ENCODE measurements at regions of chr20 and their contacts with region 1.

Region 1: DNA sequence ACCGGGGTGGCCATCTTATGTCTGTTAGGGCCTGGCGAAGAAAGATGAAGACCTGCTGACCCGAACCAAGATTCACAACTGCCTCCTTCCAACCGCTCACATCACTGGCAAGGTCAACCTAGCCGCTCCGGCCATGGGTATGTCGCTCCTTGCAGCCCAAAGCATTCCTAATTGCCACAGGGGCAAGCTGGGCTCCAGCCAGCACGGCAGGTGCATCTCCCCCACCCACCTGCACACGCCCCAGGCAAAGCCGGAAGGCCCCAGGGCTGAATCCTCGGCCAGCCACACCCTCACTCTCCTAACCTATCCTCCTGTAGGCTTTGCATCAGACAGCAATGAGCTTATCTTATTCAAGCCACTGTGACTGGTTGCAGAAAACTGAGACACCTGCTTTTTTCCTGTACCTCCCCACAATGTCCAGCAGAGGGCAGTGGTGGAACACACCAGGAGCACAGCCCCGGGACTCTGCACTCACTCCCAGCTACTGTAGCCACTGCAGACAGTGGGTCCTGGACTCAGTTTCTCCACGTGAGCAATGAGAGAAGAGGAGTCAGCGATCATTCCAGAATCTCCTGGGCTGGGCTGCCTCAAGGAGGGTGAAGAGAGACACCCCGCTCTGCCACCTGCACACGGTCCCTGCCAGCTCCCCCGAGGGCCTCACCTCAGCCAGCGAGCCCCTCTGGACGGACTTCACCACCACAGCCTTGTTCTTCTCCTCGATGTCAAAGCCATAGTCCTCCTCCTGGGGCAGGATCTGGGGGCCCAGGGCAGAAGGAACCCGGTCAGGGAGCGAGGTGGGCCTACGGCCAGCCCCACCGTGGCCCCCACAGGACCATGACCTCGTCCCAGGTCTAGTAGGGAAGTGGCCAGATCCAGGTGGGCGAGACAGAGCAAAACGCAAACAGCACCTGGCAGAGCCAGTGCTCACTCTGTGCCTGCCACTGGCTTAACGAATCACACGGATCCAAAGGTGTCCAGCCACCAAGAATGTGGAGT is 170.0 kb downstream of the PREX1 start:
- DNase-seq: peak; percentile 26 to 83 (median 68)
- ATAC-seq: peak; percentile 93
- H3K4me3 ChIP-seq: no peak overlapping the region
- H3K4me3 Mint-ChIP-seq: no peak overlapping the region
- H3K27ac ChIP-seq: no peak overlapping the region
- H3K27ac Mint-ChIP-seq: peak overlapping the region; percentile 74
- H3K4me1 ChIP-seq: no peaks in the 10 kb centered on the region
- H3K4me1 Mint-ChIP-seq: peaks cover 23% of the 10 kb centered on the region
- H3K27me3 ChIP-seq: no peaks in the 10 kb centered on the region
- H3K27me3 Mint-ChIP-seq: no peaks in the 10 kb centered on the region
- CTCF ChIP-seq: peak; percentile 96

Region 2: GRCh38 chr20:48489656-48490055 is 168.1 kb before region 1 on chr20:
- CTCF ChIA-PET with region 1: no interaction called
- POLR2A ChIA-PET with region 1: no interaction called
- intact Hi-C with region 1: no loop called
- DNase-seq: no peak
- ATAC-seq: no peak
- H3K4me3 ChIP-seq: no peak overlapping the region
- H3K4me3 Mint-ChIP-seq: no peak overlapping the region
- H3K27ac ChIP-seq: no peak overlapping the region
- H3K27ac Mint-ChIP-seq: no peak overlapping the region
- H3K4me1 ChIP-seq: no peaks in the 10 kb centered on the region
- H3K4me1 Mint-ChIP-seq: no peaks in the 10 kb centered on the region
- H3K27me3 ChIP-seq: no peaks in the 10 kb centered on the region
- H3K27me3 Mint-ChIP-seq: peaks cover 32% of the 10 kb centered on the region
- CTCF ChIP-seq: no peak

Region 3: DNA sequence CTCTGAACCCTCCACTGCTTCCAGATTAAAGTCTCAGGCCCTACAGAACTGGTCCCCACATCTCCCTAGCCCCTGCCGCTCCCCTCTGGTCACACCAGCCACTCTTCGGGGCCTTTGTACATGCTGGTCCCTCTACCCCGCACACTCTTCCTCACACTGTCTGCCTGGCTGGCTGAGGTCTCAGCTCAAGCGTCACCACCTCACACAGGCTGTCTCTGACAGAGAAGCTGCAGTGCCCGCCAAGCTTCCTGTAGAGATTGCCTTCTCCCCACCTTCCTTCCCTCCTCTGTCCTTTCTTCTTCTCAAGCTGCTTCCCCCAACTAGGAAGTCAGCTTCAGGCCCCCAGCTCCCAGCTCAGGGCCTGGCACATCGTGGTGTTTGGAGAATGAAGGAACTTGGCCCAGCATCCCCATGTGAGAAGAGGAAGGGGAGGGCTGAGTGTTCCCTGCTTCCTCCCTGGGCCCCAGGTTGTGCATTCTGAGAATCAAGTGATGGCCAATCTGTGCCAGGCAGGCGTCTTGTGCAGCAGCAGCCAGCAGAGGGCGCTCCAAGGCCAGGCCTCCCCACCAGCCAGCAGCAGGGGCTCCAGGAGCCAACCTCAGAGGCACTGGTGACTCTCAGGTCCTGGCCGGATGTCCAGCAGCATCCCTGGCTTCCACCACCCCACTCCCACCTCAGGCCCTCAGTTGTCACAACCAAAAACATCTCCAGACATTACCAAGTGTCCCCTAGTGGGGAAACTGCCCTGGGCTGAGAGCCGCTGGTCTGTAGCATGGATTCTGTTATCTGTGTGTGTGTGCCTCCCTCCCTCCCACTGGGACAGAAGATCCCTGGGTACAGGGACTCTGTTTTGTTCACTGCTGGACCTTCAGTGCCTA is 22.1 kb before region 1 on chr20:
- CTCF ChIA-PET with region 1: interaction called, 10 read pairs
- POLR2A ChIA-PET with region 1: no interaction called
- intact Hi-C with region 1: no loop called
- DNase-seq: peak in 8 of 9 experiments; percentile 52 to 74 (median 64)
- ATAC-seq: peak; percentile 34
- H3K4me3 ChIP-seq: no peak overlapping the region
- H3K4me3 Mint-ChIP-seq: no peak overlapping the region
- H3K27ac ChIP-seq: no peak overlapping the region
- H3K27ac Mint-ChIP-seq: no peak overlapping the region
- H3K4me1 ChIP-seq: no peaks in the 10 kb centered on the region
- H3K4me1 Mint-ChIP-seq: peaks cover 2% of the 10 kb centered on the region
- H3K27me3 ChIP-seq: no peaks in the 10 kb centered on the region
- H3K27me3 Mint-ChIP-seq: no peaks in the 10 kb centered on the region
- CTCF ChIP-seq: peak; percentile 13

Region 4: GRCh38 chr20:48718857-48719578 is 61.2 kb after region 1 on chr20:
- CTCF ChIA-PET with region 1: interaction called, 10 read pairs
- POLR2A ChIA-PET with region 1: no interaction called
- intact Hi-C with region 1: no loop called
- DNase-seq: peak in 8 of 9 experiments; percentile 31 to 77 (median 60)
- ATAC-seq: peak; percentile 46
- H3K4me3 ChIP-seq: no peak overlapping the region
- H3K4me3 Mint-ChIP-seq: peak overlapping the region; percentile 66
- H3K27ac ChIP-seq: peak overlapping the region in 1 of 2 experiments; percentile 60
- H3K27ac Mint-ChIP-seq: peak overlapping the region; percentile 92
- H3K4me1 ChIP-seq: peaks cover 98% of the 10 kb centered on the region
- H3K4me1 Mint-ChIP-seq: peaks cover 95% of the 10 kb centered on the region
- H3K27me3 ChIP-seq: no peaks in the 10 kb centered on the region
- H3K27me3 Mint-ChIP-seq: no peaks in the 10 kb centered on the region
- CTCF ChIP-seq: no peak

Region 5: DNA sequence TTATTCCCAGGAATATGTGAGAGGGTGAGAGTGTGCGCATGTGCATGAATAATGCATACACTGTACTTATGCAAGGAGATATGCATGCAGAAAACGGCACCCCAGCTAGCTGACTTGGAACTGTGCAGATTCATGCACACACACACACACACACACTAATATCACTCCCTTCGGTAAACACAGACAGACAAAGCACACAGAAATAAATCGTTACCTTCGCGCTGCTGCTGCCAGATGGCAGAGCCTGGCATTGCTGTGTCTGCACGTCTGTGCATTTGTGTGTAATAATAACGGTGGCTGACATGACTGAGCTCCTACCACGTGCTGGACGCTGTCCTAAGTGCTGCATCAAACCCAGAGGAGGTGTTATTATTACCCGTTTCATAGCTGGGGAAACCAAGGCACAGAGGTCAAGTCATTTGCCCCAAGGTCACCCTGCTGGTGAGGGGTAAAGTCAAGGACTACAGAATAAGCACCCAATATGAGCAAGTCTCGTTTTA is 133.3 kb after region 1 on chr20:
- CTCF ChIA-PET with region 1: interaction called, 6 read pairs
- POLR2A ChIA-PET with region 1: no interaction called
- intact Hi-C with region 1: loop called (anchors 1 to 2 kb)
- DNase-seq: peak in 4 of 9 experiments; percentile 23 to 50 (median 40)
- ATAC-seq: peak; percentile 66
- H3K4me3 ChIP-seq: no peak overlapping the region
- H3K4me3 Mint-ChIP-seq: peak overlapping the region; percentile 26
- H3K27ac ChIP-seq: no peak overlapping the region
- H3K27ac Mint-ChIP-seq: peak overlapping the region; percentile 19
- H3K4me1 ChIP-seq: peaks cover 65% of the 10 kb centered on the region
- H3K4me1 Mint-ChIP-seq: peaks cover 87% of the 10 kb centered on the region
- H3K27me3 ChIP-seq: no peaks in the 10 kb centered on the region
- H3K27me3 Mint-ChIP-seq: no peaks in the 10 kb centered on the region
- CTCF ChIP-seq: peak; percentile 43

Region 6: DNA sequence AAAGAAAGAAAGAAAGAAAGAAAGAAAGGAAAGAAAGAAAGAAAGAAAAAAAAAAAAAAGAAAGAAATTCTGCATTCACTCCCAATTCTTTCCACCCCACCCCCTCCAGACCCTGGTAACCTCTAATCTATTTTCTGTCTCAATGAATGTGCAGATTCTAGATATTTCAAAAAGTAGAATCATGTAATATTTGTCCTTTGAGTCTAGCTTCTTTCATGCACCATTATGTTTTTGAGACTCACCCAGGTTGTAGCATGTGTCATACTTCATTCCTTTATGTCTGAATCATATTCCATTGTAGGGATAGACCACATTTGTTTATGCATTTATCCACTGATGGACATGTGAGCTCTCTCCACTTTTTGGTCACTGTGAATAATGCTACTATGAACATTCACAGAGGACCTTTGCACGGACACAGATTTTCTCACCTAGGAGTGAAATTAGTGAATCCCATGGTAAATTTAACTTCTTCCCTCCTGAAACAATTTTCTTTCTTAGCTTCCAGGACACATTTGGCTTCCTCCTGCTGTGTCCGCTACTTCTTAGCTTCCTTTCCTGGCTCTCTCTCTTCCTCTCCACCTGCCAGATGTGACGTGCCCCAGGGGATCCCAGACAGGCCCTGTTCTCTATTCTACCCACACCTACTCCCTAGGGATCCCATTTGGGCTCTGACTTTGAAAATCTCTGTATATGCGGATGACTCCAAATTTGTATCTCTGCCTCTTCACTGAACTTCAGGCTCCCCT is 239.6 kb after region 1 on chr20:
- CTCF ChIA-PET with region 1: interaction called, 30 read pairs
- POLR2A ChIA-PET with region 1: no interaction called
- intact Hi-C with region 1: no loop called
- DNase-seq: no peak
- ATAC-seq: no peak
- H3K4me3 ChIP-seq: no peak overlapping the region
- H3K4me3 Mint-ChIP-seq: no peak overlapping the region
- H3K27ac ChIP-seq: no peak overlapping the region
- H3K27ac Mint-ChIP-seq: no peak overlapping the region
- H3K4me1 ChIP-seq: no peaks in the 10 kb centered on the region
- H3K4me1 Mint-ChIP-seq: no peaks in the 10 kb centered on the region
- H3K27me3 ChIP-seq: no peaks in the 10 kb centered on the region
- H3K27me3 Mint-ChIP-seq: no peaks in the 10 kb centered on the region
- CTCF ChIP-seq: no peak

Region 7: GRCh38 chr20:48912065-48912762 is 254.4 kb after region 1 on chr20:
- CTCF ChIA-PET with region 1: interaction called, 204 read pairs
- POLR2A ChIA-PET with region 1: no interaction called
- intact Hi-C with region 1: no loop called
- DNase-seq: peak in 1 of 9 experiments; percentile 20
- ATAC-seq: no peak
- H3K4me3 ChIP-seq: no peak overlapping the region
- H3K4me3 Mint-ChIP-seq: no peak overlapping the region
- H3K27ac ChIP-seq: no peak overlapping the region
- H3K27ac Mint-ChIP-seq: no peak overlapping the region
- H3K4me1 ChIP-seq: no peaks in the 10 kb centered on the region
- H3K4me1 Mint-ChIP-seq: peaks cover 6% of the 10 kb centered on the region
- H3K27me3 ChIP-seq: no peaks in the 10 kb centered on the region
- H3K27me3 Mint-ChIP-seq: no peaks in the 10 kb centered on the region
- CTCF ChIP-seq: no peak

Region 8: GRCh38 chr20:48999890-49000870 is 342.4 kb after region 1 on chr20:
- CTCF ChIA-PET with region 1: no interaction called
- POLR2A ChIA-PET with region 1: no interaction called
- intact Hi-C with region 1: no loop called
- DNase-seq: no peak
- ATAC-seq: no peak
- H3K4me3 ChIP-seq: no peak overlapping the region
- H3K4me3 Mint-ChIP-seq: no peak overlapping the region
- H3K27ac ChIP-seq: no peak overlapping the region
- H3K27ac Mint-ChIP-seq: peak overlapping the region; percentile 22
- H3K4me1 ChIP-seq: no peaks in the 10 kb centered on the region
- H3K4me1 Mint-ChIP-seq: no peaks in the 10 kb centered on the region
- H3K27me3 ChIP-seq: no peaks in the 10 kb centered on the region
- H3K27me3 Mint-ChIP-seq: no peaks in the 10 kb centered on the region
- CTCF ChIP-seq: no peak